ENCODE measurements at regions of chr14 and their contacts with region 1.

Region 1: DNA sequence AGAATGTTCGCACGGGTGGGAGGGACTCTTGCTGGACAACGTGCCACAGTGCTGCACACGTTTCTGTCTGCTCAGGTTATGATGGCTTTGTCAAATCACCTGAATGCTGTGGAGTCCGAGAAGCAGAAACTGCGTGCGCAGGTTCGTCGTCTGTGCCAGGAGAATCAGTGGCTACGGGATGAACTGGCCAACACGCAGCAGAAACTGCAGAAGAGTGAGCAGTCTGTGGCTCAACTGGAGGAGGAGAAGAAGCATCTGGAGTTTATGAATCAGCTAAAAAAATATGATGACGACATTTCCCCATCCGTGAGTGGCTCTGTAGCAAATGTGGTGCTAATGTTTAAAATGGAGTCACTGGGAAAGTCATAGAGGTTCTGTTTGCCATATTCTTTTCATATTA is 28.5 kb downstream of the KLC1 start:
- DNase-seq: no peak
- ATAC-seq: peak in 7 of 8 donors; percentile 16 to 73 (median 44)
- H3K4me3 ChIP-seq: no peak overlapping the region
- H3K27ac ChIP-seq: peak overlapping the region in 3 of 10 donors; percentile 2 to 41 (median 24)
- H3K4me1 ChIP-seq: peaks cover 14 to 56% (median 41%) of the 10 kb centered on the region in 9 donors
- H3K27me3 ChIP-seq: no peaks in the 10 kb centered on the region
- CTCF ChIP-seq: no peak

Region 2: DNA sequence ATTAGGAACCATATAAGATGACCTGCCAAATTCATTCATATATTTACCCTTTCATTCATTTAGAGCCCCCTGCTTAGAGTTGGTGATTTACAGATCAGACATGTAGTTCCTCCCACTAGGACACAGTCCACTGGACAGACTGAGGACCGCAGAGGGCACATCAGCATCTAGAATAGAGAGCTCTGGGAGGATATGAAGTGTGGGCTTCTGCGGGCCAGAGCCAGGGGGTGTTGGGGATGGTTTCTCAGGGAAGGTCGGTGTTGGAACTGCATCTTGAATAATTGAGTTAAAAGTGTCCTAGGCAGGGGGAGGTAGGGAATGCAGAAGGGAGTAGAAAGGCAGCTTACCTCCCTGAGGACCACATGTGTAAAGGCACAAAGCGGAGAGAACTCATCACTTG is 14.4 kb after region 1 on chr14:
- intact Hi-C with region 1: loop called in 1 of 10 experiments (anchors 2 kb)
- DNase-seq: no peak
- ATAC-seq: no peak
- H3K4me3 ChIP-seq: no peak overlapping the region
- H3K27ac ChIP-seq: no peak overlapping the region
- H3K4me1 ChIP-seq: peaks cover 0 to 8% (median 0%) of the 10 kb centered on the region in 9 donors
- H3K27me3 ChIP-seq: no peaks in the 10 kb centered on the region
- CTCF ChIP-seq: no peak

Measured in heart right ventricle (tissue), 16 donors.